OCI-LY7 (cell line): ENCODE measurements at regions of chr19 and their contacts with region 1.

Region 1: GRCh38 chr19:42529248-42529764 is 1.0 kb upstream of the CEACAM1 start:
- DNase-seq: peak; percentile 84
- H3K4me3 ChIP-seq: no peak overlapping the region
- H3K27ac ChIP-seq: peak overlapping the region; percentile 45
- H3K4me1 ChIP-seq: peaks cover 22% of the 10 kb centered on the region
- CTCF ChIP-seq: peak; percentile 94

Region 2: DNA sequence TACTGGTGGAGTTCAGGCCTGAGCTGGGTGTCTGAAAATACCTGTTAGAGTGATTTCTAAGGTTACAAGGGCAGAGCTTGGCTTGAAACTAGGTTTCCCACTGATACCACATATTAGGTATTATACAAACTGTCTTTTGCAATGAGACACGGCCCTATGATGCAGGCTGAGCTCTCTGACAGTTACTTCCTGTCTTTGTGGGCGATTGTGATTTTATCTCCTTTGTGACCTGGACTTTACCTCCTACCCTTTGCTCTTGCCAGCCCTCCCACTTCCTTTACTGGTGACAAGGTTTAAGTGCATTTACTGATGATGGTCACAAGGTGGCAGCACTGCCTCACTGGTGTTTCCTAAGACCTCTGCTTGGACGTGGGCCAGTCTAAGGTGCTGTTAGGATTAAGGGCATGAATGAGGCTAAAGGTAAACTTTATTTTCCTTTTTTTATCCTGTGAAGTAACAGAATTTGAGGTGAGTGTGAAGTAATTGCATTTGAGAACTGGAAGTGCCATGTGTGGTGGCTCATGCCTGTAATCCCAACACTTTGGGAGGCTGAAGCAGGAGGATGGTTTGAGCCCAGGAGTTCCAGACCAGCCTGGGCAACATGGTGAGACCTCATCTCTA is 78.9 kb before region 1 on chr19:
- CTCF ChIA-PET with region 1: interaction called, 16 read pairs
- POLR2A ChIA-PET with region 1: interaction called, 4 read pairs
- intact Hi-C with region 1: loop called (anchors 1 kb)
- DNase-seq: peak; percentile 90
- H3K4me3 ChIP-seq: no peak overlapping the region
- H3K27ac ChIP-seq: no peak overlapping the region
- H3K4me1 ChIP-seq: peaks cover 22% of the 10 kb centered on the region
- CTCF ChIP-seq: peak; percentile 96